PC-3 (cell line): ENCODE measurements at regions of chr9 and their contacts with region 1.

Region 1: DNA sequence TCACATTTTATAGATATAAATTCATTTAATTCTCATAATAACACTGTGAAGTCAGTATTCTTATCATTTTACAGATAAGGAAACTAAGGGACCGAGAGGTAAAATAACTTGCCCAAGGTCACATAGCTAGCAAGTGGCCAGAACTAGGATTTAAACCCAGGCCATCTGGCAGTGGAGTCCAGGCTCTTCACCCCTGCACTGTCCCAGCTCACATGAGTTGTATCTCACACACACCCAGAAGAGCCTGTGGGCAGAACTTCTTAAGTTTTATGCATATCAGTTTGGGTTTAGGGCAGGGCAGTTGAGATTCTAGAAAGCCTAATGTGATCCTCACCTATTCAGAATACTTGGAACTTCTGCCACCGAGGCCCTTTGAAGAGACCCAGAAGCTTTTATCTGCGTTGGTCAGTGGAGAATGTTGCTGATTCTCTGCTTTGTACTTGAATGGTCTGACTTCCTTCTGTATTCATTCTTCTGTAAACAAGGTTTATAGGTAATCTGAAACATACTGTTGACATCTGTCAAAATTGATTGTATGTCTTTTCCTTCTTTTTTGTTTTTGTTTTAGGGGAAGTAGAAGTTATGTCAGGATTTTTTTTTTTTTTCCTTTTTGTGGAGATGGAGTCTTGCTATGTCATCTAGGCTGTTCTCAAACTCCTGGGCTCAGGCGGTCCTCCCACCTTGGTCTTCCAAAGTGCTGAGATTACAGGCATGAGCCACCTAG is 75.8 kb downstream of the KIAA1958 start:
- DNase-seq: no peak
- ATAC-seq: no peak
- H3K4me3 ChIP-seq: no peak overlapping the region
- H3K27ac ChIP-seq: no peak overlapping the region
- H3K4me1 ChIP-seq: peaks cover 13% of the 10 kb centered on the region
- H3K27me3 ChIP-seq: no peaks in the 10 kb centered on the region
- CTCF ChIP-seq: no peak

Region 2: DNA sequence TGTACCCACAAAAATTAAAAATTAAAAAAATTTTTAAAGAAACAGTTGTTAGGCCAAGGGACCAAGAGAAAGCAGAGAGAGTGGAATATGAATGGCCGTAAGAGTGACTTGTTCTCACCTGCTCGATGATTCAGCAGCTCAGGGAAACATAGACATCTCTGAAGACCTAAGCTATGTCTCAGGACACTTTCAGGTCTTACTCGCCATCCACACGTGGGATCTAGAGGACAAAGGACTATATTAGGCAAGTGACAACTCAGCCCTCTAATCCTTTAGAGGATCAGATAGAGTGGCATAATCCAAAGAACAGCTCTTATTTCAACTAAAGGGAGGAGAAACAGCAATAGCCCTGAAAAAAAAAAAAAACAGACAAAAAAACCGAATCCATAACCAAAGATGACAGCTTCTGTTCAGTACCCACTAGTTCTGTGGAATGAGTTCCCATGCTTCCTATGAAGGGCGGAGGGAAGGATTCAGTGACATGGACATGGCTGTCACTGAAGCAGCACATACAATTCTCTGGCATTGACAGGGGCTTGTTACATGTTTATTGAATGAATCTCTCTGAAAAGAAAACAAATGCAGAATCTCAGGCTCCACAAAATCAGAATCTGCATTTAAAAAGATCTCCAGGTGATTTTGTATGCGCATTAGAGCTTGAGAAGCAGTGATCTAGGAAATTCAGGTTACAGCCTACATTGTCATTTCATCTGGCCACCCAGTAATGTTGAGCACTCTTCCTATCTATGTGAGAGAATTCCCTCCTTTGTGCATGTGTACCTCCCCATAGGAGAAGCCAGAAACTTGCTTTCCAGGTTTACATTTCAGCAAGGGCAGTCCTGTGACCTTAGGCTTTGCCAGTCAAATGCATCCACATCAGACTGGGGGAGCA is 20.2 kb after region 1 on chr9:
- CTCF ChIA-PET with region 1: no interaction called
- POLR2A ChIA-PET with region 1: interaction called, 11 read pairs
- intact Hi-C with region 1: no loop called
- DNase-seq: no peak
- ATAC-seq: no peak
- H3K4me3 ChIP-seq: no peak overlapping the region
- H3K27ac ChIP-seq: no peak overlapping the region
- H3K4me1 ChIP-seq: no peaks in the 10 kb centered on the region
- H3K27me3 ChIP-seq: no peaks in the 10 kb centered on the region
- CTCF ChIP-seq: no peak

Region 3: GRCh38 chr9:112620388-112620787 is 58.0 kb after region 1 on chr9:
- CTCF ChIA-PET with region 1: no interaction called
- POLR2A ChIA-PET with region 1: no interaction called
- intact Hi-C with region 1: no loop called
- DNase-seq: no peak
- ATAC-seq: no peak
- H3K4me3 ChIP-seq: no peak overlapping the region
- H3K27ac ChIP-seq: no peak overlapping the region
- H3K4me1 ChIP-seq: no peaks in the 10 kb centered on the region
- H3K27me3 ChIP-seq: no peaks in the 10 kb centered on the region
- CTCF ChIP-seq: no peak